BJ (cell line): ENCODE measurements at regions of chr9 and their contacts with region 1.

Region 1: GRCh38 chr9:89549031-89549644 is 51.2 kb upstream of the SEMA4D start:
- DNase-seq: no peak
- H3K4me3 ChIP-seq: no peak overlapping the region
- H3K27me3 ChIP-seq: peaks cover 2% of the 10 kb centered on the region
- CTCF ChIP-seq: peak; percentile 96

Region 2: DNA sequence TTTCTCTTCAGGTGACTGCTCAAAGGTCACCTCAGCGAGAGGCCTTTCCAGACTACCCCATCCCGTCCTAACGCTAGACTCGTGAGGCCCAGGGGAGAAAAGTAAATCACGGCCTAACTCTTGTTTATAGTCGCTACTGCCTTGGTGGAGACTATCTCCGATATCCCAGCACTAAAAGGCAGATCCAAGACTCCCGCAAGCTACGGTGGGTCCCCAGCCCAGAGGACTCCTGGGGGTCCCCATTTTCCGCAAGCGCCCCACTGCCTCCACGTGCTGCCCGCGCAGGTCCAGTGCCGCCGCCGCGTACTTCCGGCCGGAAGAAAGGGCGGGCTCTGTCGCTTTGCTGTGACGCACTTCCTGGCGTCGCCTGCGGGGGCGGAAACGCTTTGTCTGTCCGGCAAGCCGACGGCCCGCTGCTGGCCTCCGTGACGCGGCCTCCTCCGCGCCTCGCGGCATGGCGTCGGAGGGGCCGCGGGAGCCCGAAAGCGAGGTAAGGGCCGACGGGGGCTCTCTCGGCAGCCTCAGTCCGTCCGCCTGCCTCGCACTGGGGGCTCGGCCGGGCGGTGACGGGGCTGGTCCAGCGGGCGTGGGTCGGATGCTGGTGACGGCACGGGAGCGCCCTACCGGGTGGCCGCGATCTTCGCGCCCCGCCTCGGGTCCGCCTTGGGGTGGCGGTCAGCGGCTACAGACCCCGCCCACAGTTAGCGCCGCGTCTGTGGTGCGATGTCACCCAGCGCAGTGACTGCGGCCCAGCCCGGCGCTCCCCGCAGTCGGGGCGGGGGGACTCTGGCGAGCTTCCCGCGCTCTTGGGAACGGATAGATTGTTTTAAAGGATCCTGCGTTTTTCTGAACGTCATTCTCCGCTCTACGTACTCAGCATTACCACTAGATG is 230.8 kb before region 1 on chr9 and contains the start of gene SECISBP2:
- CTCF ChIA-PET with region 1: interaction called, 45 read pairs
- POLR2A ChIA-PET with region 1: no interaction called
- DNase-seq: peak; percentile 87
- H3K4me3 ChIP-seq: peak within 1 kb of the TSS; percentile 77
- H3K27me3 ChIP-seq: no peaks in the 10 kb centered on the region
- CTCF ChIP-seq: peak; percentile 78
- polyA plus RNA-seq, gene SECISBP2: 14.3 and 14.4 TPM in 2 replicates

Region 3: GRCh38 chr9:89522261-89522958 is 26.7 kb before region 1 on chr9:
- CTCF ChIA-PET with region 1: interaction called, 11 read pairs
- POLR2A ChIA-PET with region 1: no interaction called
- DNase-seq: no peak
- H3K4me3 ChIP-seq: no peak overlapping the region
- H3K27me3 ChIP-seq: no peaks in the 10 kb centered on the region; the same call in 1 of the 2 replicates
- CTCF ChIP-seq: no peak

Region 4: DNA sequence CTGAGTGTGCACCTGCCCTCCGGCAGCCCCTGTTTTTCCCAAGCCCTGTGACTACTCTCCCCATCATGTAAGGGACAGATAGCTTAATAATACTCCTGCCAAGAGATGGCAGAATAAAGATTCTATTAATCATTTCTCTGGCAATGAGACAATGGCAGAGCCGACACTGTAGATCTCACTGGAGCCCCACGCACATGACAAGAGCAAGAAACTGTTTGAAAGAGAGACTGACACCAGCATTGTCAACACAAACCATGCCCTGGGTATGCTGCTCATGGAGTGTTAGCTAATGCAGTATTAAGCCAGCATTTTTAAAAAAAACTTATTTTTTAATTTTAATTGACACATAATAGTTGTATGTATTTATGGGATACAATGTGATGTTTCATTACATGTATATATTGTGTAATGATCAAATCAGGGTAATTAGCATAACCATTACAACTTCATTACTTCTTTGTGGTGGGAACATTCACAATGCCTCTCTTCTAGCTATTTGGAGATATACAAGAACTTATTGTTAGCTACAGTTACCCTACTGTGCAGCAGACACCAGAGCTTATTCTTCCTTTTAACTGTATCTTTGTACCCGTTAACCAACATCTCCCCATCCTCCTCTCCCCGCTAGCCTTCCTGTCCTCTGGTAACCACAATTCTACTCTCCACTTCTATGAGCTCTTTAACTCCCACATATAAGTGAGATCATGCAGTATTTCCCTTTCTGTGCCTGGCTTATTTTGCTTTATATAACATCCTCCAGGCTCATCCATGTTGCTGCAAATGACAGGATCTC is 19.7 kb before region 1 on chr9:
- CTCF ChIA-PET with region 1: interaction called, 11 read pairs
- POLR2A ChIA-PET with region 1: no interaction called
- DNase-seq: no peak
- H3K4me3 ChIP-seq: no peak overlapping the region
- H3K27me3 ChIP-seq: no peaks in the 10 kb centered on the region; the same call in 1 of the 2 replicates
- CTCF ChIP-seq: no peak

Region 5: GRCh38 chr9:89538871-89539270 is 10.3 kb before region 1 on chr9:
- CTCF ChIA-PET with region 1: interaction called, 14 read pairs
- POLR2A ChIA-PET with region 1: no interaction called
- DNase-seq: no peak
- H3K4me3 ChIP-seq: no peak overlapping the region
- H3K27me3 ChIP-seq: no peaks in the 10 kb centered on the region; the same call in 1 of the 2 replicates
- CTCF ChIP-seq: no peak